Activated T-helper 1 cell treated with anti-CD3 and anti-CD28 coated beads, Interleukin-12 subunit alpha, Interleukin-12 subunit beta, Interleukin-2, Interleukin-4 antibody, amounts not matched to agents 30 ng/mL and 10 ng/mL and 1 ng/mL, durations not matched to agents 14 hours and 24 hours and 36 hours (primary cell): ENCODE measurements at regions of chr1 and their contacts with region 1.

Region 1: GRCh38 chr1:16631248-16632043 is 18.1 kb upstream of the NBPF1 start:
- DNase-seq: no peak
- H3K4me3 Mint-ChIP-seq: no peak overlapping the region
- H3K27ac Mint-ChIP-seq: no peak overlapping the region
- H3K4me1 Mint-ChIP-seq: no peaks in the 10 kb centered on the region
- H3K27me3 Mint-ChIP-seq: no peaks in the 10 kb centered on the region

Region 2: DNA sequence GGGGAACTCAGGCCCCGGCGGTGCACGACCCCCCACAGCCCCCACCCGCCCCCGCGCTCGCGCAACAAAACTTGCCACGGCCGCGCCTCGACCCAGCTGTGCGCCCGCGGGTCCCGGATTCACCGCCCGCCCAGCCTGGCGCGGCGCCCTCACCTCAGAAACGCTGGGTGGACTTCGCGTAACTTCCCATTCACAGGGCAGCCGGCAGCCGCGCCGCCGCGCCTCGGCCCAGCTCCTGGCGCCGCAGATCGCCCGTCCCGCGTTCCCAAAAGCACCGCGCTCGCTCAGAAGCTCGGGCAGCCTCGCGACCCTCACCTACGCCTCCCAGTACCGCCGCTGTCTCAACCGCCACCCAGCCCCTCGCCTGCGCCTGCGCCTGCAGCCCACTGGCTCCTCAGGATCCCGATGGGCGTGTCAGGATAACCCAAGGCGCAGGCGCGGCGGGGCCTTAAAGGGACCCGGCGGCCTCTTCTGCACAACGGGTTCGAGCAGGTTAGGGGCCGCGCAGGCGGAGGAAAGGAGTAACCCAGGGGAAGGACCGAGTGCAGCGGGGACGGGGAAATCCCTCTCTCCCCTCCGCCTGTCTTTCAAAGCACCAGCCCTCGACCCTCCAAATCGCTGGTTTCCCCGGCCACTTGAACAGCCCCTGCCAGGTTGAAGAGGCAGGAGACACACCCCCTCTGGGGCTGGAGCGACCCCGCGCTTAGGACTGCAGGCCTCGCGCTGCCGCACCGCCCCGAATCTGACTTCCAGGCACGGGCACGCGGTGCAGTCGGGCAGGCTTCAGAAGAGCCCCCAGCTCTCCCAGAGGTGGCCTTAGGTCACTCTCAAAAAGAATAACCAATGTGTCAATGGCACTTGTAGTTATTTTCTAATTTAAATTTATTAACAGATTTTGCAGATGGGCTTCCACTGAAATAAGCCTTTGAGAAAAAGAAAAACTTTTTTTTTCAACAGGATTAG is 18.0 kb before region 1 on chr1 and contains the start of gene NBPF1:
- intact Hi-C with region 1: loop called (anchors 2 kb)
- DNase-seq: peak; percentile 87
- H3K4me3 Mint-ChIP-seq: no peak within 1 kb of the TSS
- H3K27ac Mint-ChIP-seq: no peak within 1 kb of the TSS
- H3K4me1 Mint-ChIP-seq: no peaks in the 10 kb centered on the region
- H3K27me3 Mint-ChIP-seq: no peaks in the 10 kb centered on the region
- total RNA-seq, gene NBPF1: 4.4 and 6.1 TPM in 2 replicates

Region 3: DNA sequence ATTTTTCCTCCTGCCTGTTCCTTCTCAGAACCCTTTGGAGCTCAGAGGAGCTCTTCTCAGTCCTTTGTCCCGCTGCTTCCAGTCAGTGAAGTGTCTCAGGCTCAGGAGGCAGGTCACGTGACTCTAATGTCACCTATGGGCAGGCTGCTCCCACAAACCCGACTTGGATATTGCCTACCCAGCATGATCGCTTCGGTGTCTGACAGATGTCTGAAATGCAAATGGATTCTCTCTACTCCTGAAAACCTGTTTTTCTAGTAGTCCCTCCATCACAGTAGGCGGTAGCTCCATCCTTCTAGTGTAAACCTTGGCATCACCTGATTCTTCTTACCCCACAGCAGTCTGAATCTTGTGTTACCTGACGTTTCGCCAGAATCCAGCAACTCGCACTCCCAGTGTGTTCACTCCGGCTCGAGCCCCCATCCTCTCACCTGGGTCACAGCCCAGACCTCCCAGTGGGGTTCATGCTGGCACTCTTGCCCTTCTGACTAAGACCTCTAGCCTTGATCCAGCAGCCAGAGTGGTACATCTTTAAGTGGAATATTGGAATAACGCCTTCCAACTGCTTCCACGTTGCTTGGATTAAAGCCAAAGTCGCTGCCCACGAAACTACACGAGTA is 746.0 kb after region 1 on chr1:
- intact Hi-C with region 1: no loop called
- DNase-seq: no peak
- H3K4me3 Mint-ChIP-seq: no peak overlapping the region
- H3K27ac Mint-ChIP-seq: no peak overlapping the region
- H3K4me1 Mint-ChIP-seq: no peaks in the 10 kb centered on the region
- H3K27me3 Mint-ChIP-seq: peaks cover 11% of the 10 kb centered on the region